ENCODE measurements at regions of chr15 and their contacts with region 1.

Region 1: DNA sequence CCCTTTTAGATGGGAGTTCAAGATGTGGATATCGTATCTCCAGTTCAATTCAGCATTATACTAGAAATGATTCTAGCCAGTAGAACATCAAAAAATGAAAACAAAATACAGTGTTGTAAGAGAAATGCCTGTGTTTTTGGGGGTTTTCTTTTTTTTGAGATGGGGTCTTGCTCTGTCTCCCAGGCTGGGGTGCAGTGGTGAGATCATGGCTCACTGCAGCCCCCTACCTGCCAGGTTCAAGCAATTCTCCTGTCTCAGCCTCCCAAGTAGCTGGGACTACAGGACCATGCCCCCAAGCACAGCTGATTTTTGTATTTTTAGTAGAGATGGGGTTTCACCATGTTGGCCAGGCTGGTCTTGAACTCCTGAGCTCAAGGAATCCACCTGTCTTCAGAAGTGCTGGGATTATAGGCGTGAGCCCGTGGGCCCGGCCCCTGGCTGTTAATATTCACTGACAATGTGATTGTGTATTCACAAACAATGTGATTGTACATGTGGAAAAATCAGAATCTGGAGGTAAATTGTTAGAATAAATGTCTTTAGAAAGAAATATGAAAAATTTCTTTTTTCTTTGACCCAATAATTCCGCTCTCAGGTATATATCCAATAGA is 59.0 kb downstream of the ARIH1 start:
- DNase-seq: peak; percentile 25 to 58 (median 58)
- H3K4me3 ChIP-seq: no peak overlapping the region
- H3K27ac ChIP-seq: no peak overlapping the region
- H3K4me1 ChIP-seq: no peaks in the 10 kb centered on the region
- H3K27me3 ChIP-seq: no peaks in the 10 kb centered on the region

Region 2: GRCh38 chr15:72155635-72156616 is 377.2 kb before region 1 on chr15:
- CTCF ChIA-PET with region 1: no interaction called
- POLR2A ChIA-PET with region 1: no interaction called
- DNase-seq: peak; percentile 77 to 89 (median 84)
- H3K4me3 ChIP-seq: peak overlapping the region in 6 of 7 experiments; percentile 40 to 85 (median 64)
- H3K27ac ChIP-seq: no peak overlapping the region
- H3K4me1 ChIP-seq: peaks cover 0 to 9% (median 5%) of the 10 kb centered on the region in 4 experiments
- H3K27me3 ChIP-seq: no peaks in the 10 kb centered on the region

Region 3: DNA sequence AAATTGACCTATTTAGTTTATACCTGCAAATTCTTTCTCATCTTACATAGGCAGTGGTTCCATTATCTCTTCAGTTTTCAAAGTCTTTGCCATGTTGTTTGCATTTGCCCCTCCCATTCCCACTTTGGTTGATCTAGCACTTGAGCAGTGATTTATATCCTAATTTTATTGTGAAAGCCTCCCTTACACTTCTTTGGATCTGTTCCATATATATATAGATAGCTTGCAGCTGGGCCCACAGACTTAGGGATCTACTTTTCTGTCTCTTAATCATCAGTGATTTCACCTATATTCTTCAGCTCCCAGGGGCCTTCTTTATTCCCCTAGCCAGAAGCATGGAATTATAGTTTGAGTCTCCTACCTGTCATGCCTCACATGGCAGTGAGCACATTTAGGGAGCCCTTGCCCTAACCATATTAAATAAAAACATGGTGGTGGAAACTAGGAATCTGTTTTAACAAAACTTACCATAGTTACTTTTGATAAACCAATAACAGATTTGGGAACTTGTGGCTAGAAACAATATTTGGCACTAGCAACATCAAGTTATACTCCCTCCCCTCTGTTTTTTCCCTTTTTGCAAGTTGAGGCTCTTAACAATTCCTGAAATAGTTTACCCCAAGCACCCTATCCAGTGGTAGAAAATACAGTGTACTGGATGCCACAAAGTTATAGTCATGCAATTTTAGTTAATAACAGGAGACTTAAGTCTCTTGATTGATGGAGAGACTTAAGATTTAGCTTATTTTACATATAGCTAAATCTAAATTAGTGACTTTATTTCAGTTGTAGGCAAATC is 17.3 kb before region 1 on chr15:
- CTCF ChIA-PET with region 1: interaction called, 10 read pairs
- POLR2A ChIA-PET with region 1: interaction called, 3 read pairs
- DNase-seq: no peak
- H3K4me3 ChIP-seq: no peak overlapping the region
- H3K27ac ChIP-seq: no peak overlapping the region
- H3K4me1 ChIP-seq: peaks cover 0 to 1% (median 0%) of the 10 kb centered on the region in 4 experiments
- H3K27me3 ChIP-seq: no peaks in the 10 kb centered on the region

Measured in common myeloid progenitor, CD34-positive (primary cell).